Naive thymus-derived CD4-positive, alpha-beta T cell (primary cell): ENCODE measurements at regions of chr9 and their contacts with region 1.

Region 1: GRCh38 chr9:131502781-131503625 is at the start of gene POMT1:
- DNase-seq: peak; percentile 85 to 93 (median 90)
- ATAC-seq: peak; percentile 77
- H3K4me3 ChIP-seq: peak within 1 kb of the TSS; percentile 79
- H3K4me3 Mint-ChIP-seq: peak within 1 kb of the TSS; percentile 89 to 99 (median 94)
- H3K27ac ChIP-seq: peak within 1 kb of the TSS; percentile 88
- H3K27ac Mint-ChIP-seq: peak within 1 kb of the TSS; percentile 88 to 98 (median 93)
- H3K4me1 ChIP-seq: peaks cover 41 to 42% of the 10 kb centered on the region in 2 donors
- H3K4me1 Mint-ChIP-seq: peaks cover 51 to 73% (median 60%) of the 10 kb centered on the region in 7 donors
- H3K27me3 ChIP-seq: no peaks in the 10 kb centered on the region
- H3K27me3 Mint-ChIP-seq: no peaks in the 10 kb centered on the region
- total RNA-seq, gene POMT1: 40.0 to 55.8 (median 47.7) TPM

Region 2: DNA sequence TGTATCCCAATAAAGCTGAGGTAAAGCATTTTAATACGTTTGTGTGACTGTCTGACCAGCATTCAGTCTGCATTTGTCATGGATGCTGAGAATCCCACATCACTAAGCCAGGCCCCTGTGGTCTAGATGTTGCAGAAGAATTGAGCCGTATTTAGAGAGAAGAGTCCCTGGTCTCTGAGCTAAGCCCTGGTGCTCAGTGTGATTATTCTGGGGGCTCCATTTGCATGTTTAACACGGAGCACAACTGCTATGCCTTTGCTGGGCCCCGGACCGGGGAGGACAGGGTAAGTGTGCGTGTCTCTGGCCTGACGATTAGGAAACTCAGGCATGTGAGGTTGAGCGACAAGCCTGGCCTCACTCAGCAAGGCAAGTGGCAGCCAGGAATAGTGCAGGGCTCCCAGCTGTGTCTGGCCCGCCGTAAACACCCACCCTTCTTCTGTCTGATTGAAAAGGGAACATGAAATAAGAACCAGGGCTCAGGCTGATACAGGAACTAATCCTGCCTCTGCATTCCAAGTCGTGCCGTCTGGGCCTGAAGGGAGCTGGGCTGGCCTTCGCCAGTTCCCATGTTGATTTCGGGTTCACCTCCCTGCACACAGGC is 249.0 kb before region 1 on chr9:
- CTCF ChIA-PET with region 1: no interaction called
- POLR2A ChIA-PET with region 1: no interaction called
- intact Hi-C with region 1: loop called in 1 of 2 experiments (anchors 5 kb)
- DNase-seq: peak in 1 of 9 donors; percentile 7
- ATAC-seq: no peak
- H3K4me3 ChIP-seq: no peak overlapping the region
- H3K4me3 Mint-ChIP-seq: peak overlapping the region; percentile 23 to 87 (median 52)
- H3K27ac ChIP-seq: peak overlapping the region; percentile 16
- H3K27ac Mint-ChIP-seq: peak overlapping the region; percentile 80 to 99 (median 96)
- H3K4me1 ChIP-seq: peaks cover 63 to 73% of the 10 kb centered on the region in 2 donors
- H3K4me1 Mint-ChIP-seq: peaks cover 13 to 74% (median 57%) of the 10 kb centered on the region in 7 donors
- H3K27me3 ChIP-seq: no peaks in the 10 kb centered on the region
- H3K27me3 Mint-ChIP-seq: no peaks in the 10 kb centered on the region

Region 3: GRCh38 chr9:131277910-131278701 is 224.9 kb before region 1 on chr9:
- CTCF ChIA-PET with region 1: no interaction called
- POLR2A ChIA-PET with region 1: interaction called, 4 read pairs
- intact Hi-C with region 1: loop called (anchors 5 kb)
- DNase-seq: peak in 8 of 9 donors; percentile 47 to 77 (median 62)
- ATAC-seq: peak; percentile 67
- H3K4me3 ChIP-seq: peak overlapping the region; percentile 55
- H3K4me3 Mint-ChIP-seq: peak overlapping the region; percentile 83 to 97 (median 88)
- H3K27ac ChIP-seq: peak overlapping the region; percentile 96
- H3K27ac Mint-ChIP-seq: peak overlapping the region; percentile 84 to 95 (median 91)
- H3K4me1 ChIP-seq: peaks cover 21 to 23% of the 10 kb centered on the region in 2 donors
- H3K4me1 Mint-ChIP-seq: peaks cover 17 to 34% (median 27%) of the 10 kb centered on the region in 7 donors
- H3K27me3 ChIP-seq: no peaks in the 10 kb centered on the region
- H3K27me3 Mint-ChIP-seq: peaks cover 0 to 18% (median 0%) of the 10 kb centered on the region in 5 donors

Region 4: GRCh38 chr9:131366761-131367401 is 136.1 kb before region 1 on chr9:
- CTCF ChIA-PET with region 1: interaction called, 3 read pairs
- POLR2A ChIA-PET with region 1: no interaction called
- intact Hi-C with region 1: loop called in 1 of 2 experiments (anchors 2 kb)
- DNase-seq: no peak
- ATAC-seq: no peak
- H3K4me3 ChIP-seq: no peak overlapping the region
- H3K4me3 Mint-ChIP-seq: no peak overlapping the region
- H3K27ac ChIP-seq: no peak overlapping the region
- H3K27ac Mint-ChIP-seq: peak overlapping the region in 1 of 9 donors; percentile 31
- H3K4me1 ChIP-seq: peaks cover 0 to under 1% of the 10 kb centered on the region in 2 donors
- H3K4me1 Mint-ChIP-seq: peaks cover 1 to 43% (median 19%) of the 10 kb centered on the region in 7 donors
- H3K27me3 ChIP-seq: no peaks in the 10 kb centered on the region
- H3K27me3 Mint-ChIP-seq: no peaks in the 10 kb centered on the region

Region 5: DNA sequence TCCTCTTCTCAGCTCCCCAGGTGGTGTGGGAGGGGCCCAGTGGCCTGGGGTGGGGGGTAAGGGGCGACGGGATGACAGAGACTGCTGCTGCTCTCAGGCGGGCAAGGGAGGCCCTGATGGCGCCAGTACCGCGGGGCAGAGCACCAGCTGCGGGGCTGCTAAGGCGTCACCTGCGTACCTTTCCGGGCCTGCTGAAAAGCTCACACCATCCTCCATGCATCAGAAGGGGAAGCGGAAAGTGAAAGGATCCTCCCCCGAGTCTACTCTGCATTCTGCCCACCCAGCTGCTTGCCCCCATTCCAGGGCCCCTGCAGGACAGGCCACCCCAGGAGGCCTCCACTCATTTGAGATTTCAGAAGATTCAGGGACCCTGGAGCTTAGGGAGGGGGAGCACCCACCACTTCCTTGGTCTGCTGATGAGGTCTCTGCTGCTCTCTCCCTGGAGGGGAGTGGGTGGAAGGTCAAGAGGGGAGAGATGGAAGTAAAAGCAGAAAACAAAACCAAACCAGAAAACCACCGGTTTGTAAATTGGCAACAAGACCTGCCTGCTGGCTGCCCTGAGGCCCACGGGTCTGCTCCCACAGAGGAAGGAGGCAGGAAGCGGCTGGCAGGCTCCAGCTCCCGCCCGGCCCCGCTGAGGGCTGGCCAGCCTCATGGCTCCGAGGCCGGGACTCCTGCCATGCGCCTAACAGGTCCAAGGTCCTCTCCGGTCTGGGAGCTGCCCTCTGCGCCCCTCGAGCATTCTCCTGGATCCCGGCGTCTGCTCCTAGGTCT is 75.9 kb after region 1 on chr9:
- CTCF ChIA-PET with region 1: no interaction called
- POLR2A ChIA-PET with region 1: no interaction called
- intact Hi-C with region 1: loop called (anchors 2 to 5 kb)
- DNase-seq: peak; percentile 30 to 69 (median 63)
- ATAC-seq: peak; percentile 90
- H3K4me3 ChIP-seq: peak overlapping the region; percentile 34
- H3K4me3 Mint-ChIP-seq: peak overlapping the region; percentile 29 to 79 (median 72)
- H3K27ac ChIP-seq: peak overlapping the region; percentile 71
- H3K27ac Mint-ChIP-seq: peak overlapping the region; percentile 88 to 96 (median 92)
- H3K4me1 ChIP-seq: peaks cover 23 to 26% of the 10 kb centered on the region in 2 donors
- H3K4me1 Mint-ChIP-seq: peaks cover 18 to 42% (median 26%) of the 10 kb centered on the region in 7 donors
- H3K27me3 ChIP-seq: no peaks in the 10 kb centered on the region
- H3K27me3 Mint-ChIP-seq: no peaks in the 10 kb centered on the region

Region 6: DNA sequence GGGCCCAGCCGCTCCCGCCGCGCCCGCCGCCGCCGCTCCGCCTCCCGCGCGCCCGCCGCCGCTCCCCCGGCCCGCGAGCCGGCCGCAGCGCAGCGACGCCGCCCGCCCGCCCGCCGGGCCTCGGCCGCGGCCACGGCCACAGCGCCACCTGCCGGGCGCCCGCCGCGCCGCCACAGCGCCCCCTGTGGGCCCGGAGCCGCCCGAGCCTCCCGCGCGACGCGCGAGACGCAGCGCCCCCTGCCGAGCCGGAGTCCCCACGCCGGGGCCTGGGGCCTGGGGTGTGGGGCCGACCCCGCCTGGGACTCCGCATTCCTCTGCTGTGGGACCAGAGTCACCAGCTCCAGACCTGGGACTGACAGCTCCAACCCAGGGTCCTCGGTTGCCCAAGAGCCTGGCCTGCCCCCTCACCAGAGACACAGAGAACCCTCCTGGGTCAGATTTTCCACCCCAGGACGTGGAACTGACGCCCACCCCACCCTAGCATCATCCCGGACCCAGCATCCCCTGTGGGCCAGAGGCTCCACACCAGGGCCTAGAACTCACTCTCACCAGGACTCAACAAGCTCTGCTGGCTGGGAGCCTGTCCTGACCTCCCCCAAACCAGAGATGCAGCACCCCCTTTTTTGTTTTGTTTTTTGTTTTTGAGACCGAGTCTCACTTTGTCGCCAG is 237.1 kb after region 1 on chr9 and contains the start of gene RAPGEF1:
- CTCF ChIA-PET with region 1: interaction called, 3 read pairs
- POLR2A ChIA-PET with region 1: interaction called, 13 read pairs
- intact Hi-C with region 1: loop called (anchors 2 to 5 kb)
- DNase-seq: peak; percentile 65 to 99 (median 80)
- ATAC-seq: peak; percentile 94
- H3K4me3 ChIP-seq: peak within 1 kb of the TSS; percentile 80
- H3K4me3 Mint-ChIP-seq: peak within 1 kb of the TSS; percentile 80 to 96 (median 92)
- H3K27ac ChIP-seq: peak within 1 kb of the TSS; percentile 68
- H3K27ac Mint-ChIP-seq: peak within 1 kb of the TSS; percentile 80 to 97 (median 92)
- H3K4me1 ChIP-seq: peaks cover 51 to 62% of the 10 kb centered on the region in 2 donors
- H3K4me1 Mint-ChIP-seq: peaks cover 43 to 63% (median 59%) of the 10 kb centered on the region in 7 donors
- H3K27me3 ChIP-seq: no peaks in the 10 kb centered on the region
- H3K27me3 Mint-ChIP-seq: no peaks in the 10 kb centered on the region
- total RNA-seq, gene RAPGEF1: 81.1 to 181 (median 85.8) TPM